ENCODE measurements at regions of chr5 and their contacts with region 1.

Region 1: DNA sequence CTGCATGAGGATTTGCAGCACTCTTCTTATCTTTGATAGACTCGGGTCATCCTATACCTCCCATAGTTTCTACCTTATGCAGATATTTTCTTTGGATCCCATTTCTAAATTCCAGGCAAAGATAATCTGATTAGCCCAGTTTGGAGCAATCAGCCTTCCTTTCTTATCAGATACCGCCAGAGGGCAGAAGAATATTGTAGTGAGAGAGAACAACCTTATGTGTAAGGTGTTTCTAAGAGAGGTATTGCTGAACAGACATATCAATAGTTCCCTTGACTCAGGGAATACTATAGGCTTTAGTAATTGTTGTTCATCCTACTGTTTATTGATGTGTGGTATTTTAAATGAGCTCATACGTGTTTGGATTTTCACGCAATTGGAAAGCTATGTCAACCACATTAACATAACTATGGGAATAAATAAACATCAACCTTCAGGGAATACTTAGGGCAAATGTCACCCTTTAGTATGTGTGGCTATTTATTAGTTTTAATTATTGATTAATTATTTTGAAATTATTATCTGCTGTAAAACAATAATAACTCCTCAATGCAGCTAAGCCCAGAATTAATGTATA is 1435.2 kb upstream of the CDH9 start:
- DNase-seq: peak; percentile 75
- ATAC-seq: peak; percentile 86
- H3K4me3 ChIP-seq: no peak overlapping the region
- H3K27ac ChIP-seq: no peak overlapping the region
- H3K4me1 ChIP-seq: no peaks in the 10 kb centered on the region
- H3K27me3 ChIP-seq: no peaks in the 10 kb centered on the region
- CTCF ChIP-seq: peak; percentile 80

Region 2: GRCh38 chr5:27938989-27939388 is 534.6 kb before region 1 on chr5:
- CTCF ChIA-PET with region 1: no interaction called
- POLR2A ChIA-PET with region 1: no interaction called
- intact Hi-C with region 1: loop called (anchors 5 kb)
- DNase-seq: no peak
- ATAC-seq: no peak
- H3K4me3 ChIP-seq: no peak overlapping the region
- H3K27ac ChIP-seq: no peak overlapping the region
- H3K4me1 ChIP-seq: no peaks in the 10 kb centered on the region
- H3K27me3 ChIP-seq: no peaks in the 10 kb centered on the region
- CTCF ChIP-seq: no peak

Region 3: GRCh38 chr5:28344803-28345433 is 128.7 kb before region 1 on chr5:
- CTCF ChIA-PET with region 1: no interaction called
- POLR2A ChIA-PET with region 1: no interaction called
- intact Hi-C with region 1: loop called (anchors 5 kb)
- DNase-seq: peak; percentile 77
- ATAC-seq: peak; percentile 62
- H3K4me3 ChIP-seq: no peak overlapping the region
- H3K27ac ChIP-seq: no peak overlapping the region
- H3K4me1 ChIP-seq: no peaks in the 10 kb centered on the region
- H3K27me3 ChIP-seq: no peaks in the 10 kb centered on the region
- CTCF ChIP-seq: peak; percentile 89

Region 4: GRCh38 chr5:28493456-28493855 is 19.8 kb after region 1 on chr5:
- CTCF ChIA-PET with region 1: no interaction called
- POLR2A ChIA-PET with region 1: no interaction called
- intact Hi-C with region 1: no loop called
- DNase-seq: no peak
- ATAC-seq: no peak
- H3K4me3 ChIP-seq: no peak overlapping the region
- H3K27ac ChIP-seq: no peak overlapping the region
- H3K4me1 ChIP-seq: no peaks in the 10 kb centered on the region
- H3K27me3 ChIP-seq: no peaks in the 10 kb centered on the region
- CTCF ChIP-seq: no peak

Region 5: DNA sequence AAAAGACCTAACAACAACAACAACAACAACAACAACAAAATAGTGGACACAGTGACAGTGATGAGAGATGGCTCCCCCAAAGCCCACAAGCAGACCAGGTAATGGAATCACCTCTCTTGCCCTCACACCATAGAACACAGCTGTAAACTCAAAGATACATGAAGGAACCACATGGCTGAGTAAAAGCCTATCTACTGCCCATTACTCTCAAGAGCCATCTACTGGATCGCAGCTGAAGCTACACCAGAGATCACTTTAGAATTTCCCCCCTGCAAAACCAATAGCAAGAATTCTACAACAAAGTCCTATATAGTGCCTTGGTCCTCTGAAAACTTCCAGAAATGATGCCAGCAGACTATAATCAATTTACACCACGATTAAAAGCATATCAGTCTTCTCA is 102.4 kb after region 1 on chr5:
- CTCF ChIA-PET with region 1: no interaction called
- POLR2A ChIA-PET with region 1: no interaction called
- intact Hi-C with region 1: loop called (anchors 1 kb)
- DNase-seq: peak; percentile 54
- ATAC-seq: peak; percentile 77
- H3K4me3 ChIP-seq: no peak overlapping the region
- H3K27ac ChIP-seq: no peak overlapping the region
- H3K4me1 ChIP-seq: peaks cover 4% of the 10 kb centered on the region; the same call in 1 of the 2 replicates
- H3K27me3 ChIP-seq: no peaks in the 10 kb centered on the region
- CTCF ChIP-seq: peak; percentile 73

Region 6: DNA sequence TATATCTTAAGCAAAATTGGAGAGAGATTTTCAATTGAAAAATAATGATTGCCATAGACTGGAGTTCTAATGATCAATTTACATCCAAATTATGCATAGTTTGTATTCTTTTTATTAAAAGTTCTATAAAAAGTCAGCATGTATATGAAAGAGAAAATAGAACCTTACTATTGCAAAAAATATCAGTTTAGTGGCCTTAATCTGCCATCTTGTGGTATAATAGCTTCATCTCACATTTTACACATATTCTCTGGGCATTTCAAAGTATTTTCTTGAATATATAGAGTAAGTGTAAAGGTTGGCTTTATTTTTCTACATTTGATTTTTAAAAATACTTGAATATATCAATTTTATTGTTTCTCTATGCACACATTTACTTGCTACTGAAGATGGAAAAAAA is 423.3 kb after region 1 on chr5:
- CTCF ChIA-PET with region 1: no interaction called
- POLR2A ChIA-PET with region 1: no interaction called
- intact Hi-C with region 1: loop called (anchors 5 kb)
- DNase-seq: peak; percentile 59
- ATAC-seq: no peak
- H3K4me3 ChIP-seq: no peak overlapping the region
- H3K27ac ChIP-seq: no peak overlapping the region
- H3K4me1 ChIP-seq: 0 out of 2 replicates have a peak, but pooled peaks cover 3% of the 10 kb centered on the region
- H3K27me3 ChIP-seq: no peaks in the 10 kb centered on the region
- CTCF ChIP-seq: peak; percentile 59